Left cardiac atrium (tissue), 4 donors: ENCODE measurements at regions of chr2 and their contacts with region 1.

Region 1: GRCh38 chr2:172977270-172978062 is 98.2 kb upstream of the MAP3K20 start:
- DNase-seq: no peak
- ATAC-seq: peak; percentile 50 to 53

Region 2: DNA sequence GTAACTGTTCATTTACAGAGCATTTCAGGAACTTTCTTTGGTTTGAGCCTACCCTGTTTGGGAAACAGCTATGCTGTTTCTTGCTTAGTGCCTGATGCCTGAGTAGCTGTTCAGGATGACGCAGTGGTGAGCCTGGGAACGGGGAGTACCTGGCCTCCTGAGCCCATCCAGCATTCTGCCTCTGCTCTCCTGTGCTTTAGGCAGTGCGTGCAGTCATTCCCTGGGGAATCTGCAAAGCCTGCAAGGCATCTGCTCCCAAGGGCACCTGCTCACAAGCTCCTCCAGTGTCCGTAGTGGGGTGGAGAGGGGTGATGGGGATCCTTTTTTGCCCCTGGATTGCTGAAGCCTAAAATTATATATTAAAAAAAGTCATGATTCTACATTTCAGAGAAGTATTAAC is 173.0 kb before region 1 on chr2:
- intact Hi-C with region 1: no loop called
- DNase-seq: no peak
- ATAC-seq: no peak

Region 3: GRCh38 chr2:172845028-172845630 is 132.3 kb before region 1 on chr2:
- intact Hi-C with region 1: no loop called
- DNase-seq: no peak
- ATAC-seq: no peak

Region 4: GRCh38 chr2:173021939-173022371 is 44.5 kb after region 1 on chr2:
- intact Hi-C with region 1: loop called (anchors 2 to 10 kb)
- DNase-seq: peak; percentile 50
- ATAC-seq: peak; percentile 82 to 93

Region 5: DNA sequence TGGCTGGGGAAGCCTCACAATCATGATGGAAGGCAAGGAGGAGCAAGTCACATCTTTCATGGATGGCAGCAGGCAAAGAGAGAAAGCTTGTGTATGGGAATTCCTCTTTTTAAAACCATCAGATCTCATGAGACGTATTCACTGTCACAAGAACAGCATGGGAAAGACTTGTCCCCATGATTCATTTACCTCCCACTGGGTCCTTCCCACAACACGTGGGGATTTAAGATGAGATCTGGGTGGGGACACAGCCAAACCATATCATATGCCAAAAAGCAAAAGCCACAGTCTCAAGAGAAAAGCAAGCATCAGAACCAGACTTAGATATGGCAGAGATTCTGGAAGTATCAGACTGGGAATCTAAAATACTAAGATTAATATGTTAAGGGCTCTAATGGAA is 1388.1 kb after region 1 on chr2:
- intact Hi-C with region 1: no loop called
- DNase-seq: no peak
- ATAC-seq: no peak